Activated T-helper 2 cell treated with anti-CD3 and anti-CD28 coated beads, Interferon-gamma antibody, Interleukin-2, Interleukin-4, amounts not matched to agents 10 μg/mL and 5 μg/mL and 100 μg/mL, durations not matched to agents 14 hours and 24 hours and 36 hours (primary cell): ENCODE measurements at regions of chr6 and their contacts with region 1.

Region 1: GRCh38 chr6:33200219-33201146 is at the starts of genes RXRB and SLC39A7:
- DNase-seq: peak; percentile 97
- H3K4me3 Mint-ChIP-seq: peak within 1 kb of the TSS; percentile 100
- H3K27ac Mint-ChIP-seq: peak within 1 kb of the TSS; percentile 98
- H3K4me1 Mint-ChIP-seq: peaks cover 50% of the 10 kb centered on the region
- H3K27me3 Mint-ChIP-seq: no peaks in the 10 kb centered on the region
- total RNA-seq, gene RXRB: 47.8 and 50.0 TPM in 2 replicates
- total RNA-seq, gene SLC39A7: 63.8 and 69.6 TPM in 2 replicates

Region 2: DNA sequence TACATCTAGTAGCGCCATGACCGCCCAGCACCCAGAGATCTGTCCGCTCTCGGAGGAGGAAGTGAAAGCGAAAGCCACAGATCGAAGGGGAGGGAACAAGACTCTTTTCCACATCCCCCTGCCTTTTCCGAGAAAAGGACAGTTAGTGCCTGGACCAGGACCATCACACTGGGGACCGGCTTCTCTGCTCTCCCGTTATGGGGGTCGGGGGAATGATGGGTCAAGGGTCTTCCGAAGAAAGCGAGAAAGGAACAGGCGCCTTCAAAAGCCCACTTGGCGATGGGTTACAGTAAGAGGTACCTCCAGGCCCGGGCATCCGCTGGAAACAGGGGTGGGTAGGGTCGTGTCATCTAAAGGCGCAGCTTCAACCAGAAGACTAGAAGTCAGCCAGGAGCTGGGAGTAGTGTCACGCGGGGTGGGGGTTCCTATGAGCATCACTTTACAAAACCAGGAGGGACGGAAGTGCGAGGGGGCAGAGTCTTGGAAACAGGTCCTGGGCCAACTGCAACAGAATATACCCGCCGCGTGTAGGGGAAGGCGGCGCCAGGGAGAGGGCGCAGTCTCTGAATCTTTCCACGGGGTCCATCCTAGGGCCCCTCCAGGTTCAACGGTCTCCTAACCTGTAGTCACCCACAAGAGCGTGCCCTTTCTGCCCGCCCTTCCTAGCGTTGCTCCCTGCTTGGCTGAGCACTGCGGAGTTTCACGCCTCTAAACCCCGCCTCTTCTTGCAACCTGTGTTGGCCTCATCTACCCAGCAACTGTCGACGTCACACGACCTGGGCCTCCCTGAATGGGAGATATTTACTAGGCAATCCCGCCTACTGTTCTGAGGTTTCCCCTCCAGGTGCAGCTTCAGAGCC is 356.3 kb before region 1 on chr6 and contains the start of gene PSMB8:
- intact Hi-C with region 1: loop called (anchors 10 kb)
- DNase-seq: peak; percentile 96
- H3K4me3 Mint-ChIP-seq: peak within 1 kb of the TSS; percentile 99
- H3K27ac Mint-ChIP-seq: peak within 1 kb of the TSS; percentile 98
- H3K4me1 Mint-ChIP-seq: peaks cover 66% of the 10 kb centered on the region
- H3K27me3 Mint-ChIP-seq: no peaks in the 10 kb centered on the region
- total RNA-seq, gene PSMB8: 352 and 368 TPM in 2 replicates

Region 3: GRCh38 chr6:33161354-33162331 is 38.8 kb before region 1 on chr6:
- intact Hi-C with region 1: loop called (anchors 1 kb)
- DNase-seq: peak; percentile 77
- H3K4me3 Mint-ChIP-seq: peak overlapping the region; percentile 83
- H3K27ac Mint-ChIP-seq: peak overlapping the region; percentile 80
- H3K4me1 Mint-ChIP-seq: peaks cover 14% of the 10 kb centered on the region
- H3K27me3 Mint-ChIP-seq: peaks cover under 1% of the 10 kb centered on the region

Region 4: GRCh38 chr6:33172688-33173534 is 27.6 kb before region 1 on chr6:
- intact Hi-C with region 1: no loop called
- DNase-seq: no peak
- H3K4me3 Mint-ChIP-seq: no peak overlapping the region
- H3K27ac Mint-ChIP-seq: no peak overlapping the region
- H3K4me1 Mint-ChIP-seq: no peaks in the 10 kb centered on the region
- H3K27me3 Mint-ChIP-seq: peaks cover 2% of the 10 kb centered on the region

Region 5: DNA sequence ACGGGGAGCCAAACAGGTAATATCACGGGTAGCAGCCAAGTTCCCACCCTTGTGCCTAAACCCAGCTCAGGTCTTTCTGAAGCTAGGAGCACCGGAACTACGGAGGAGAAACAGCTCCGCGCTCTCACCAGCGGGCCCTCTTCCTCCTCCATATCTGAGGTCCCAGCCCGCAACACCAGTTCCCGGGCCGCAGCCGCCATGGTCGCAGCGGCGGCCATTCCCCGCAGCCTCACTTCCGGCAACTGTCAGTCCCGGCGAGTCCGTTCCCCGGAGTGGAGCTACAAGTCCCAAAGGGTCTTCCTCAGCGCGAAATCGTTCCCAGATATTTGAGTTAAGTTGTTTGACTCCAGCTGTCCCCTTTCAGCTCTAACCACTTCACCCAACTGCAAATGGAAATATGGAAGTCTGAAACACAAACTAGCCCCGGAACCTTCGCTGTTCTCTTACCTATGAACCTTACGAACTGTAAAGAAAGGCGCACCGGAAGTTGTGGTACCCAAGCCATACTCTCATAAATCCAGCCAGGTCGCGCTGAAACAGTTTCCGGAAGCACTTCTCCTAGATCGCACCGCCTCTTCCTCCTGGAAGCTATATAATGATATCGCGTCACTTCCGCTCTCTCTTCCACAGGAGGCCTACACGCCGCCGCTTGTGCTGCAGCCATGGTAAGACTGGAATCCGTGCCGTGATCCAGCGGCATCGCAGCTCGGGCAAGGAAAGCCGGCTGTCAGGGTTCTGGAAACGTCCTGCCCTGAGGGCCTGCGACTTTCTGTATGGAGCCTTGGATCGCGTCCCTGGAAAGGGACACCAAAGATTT is 71.2 kb after region 1 on chr6 and contains the starts of genes RPS18 and VPS52:
- intact Hi-C with region 1: loop called (anchors 2 kb)
- DNase-seq: peak; percentile 92
- H3K4me3 Mint-ChIP-seq: peak within 1 kb of the TSS; percentile 98
- H3K27ac Mint-ChIP-seq: peak within 1 kb of the TSS; percentile 100
- H3K4me1 Mint-ChIP-seq: peaks cover 31% of the 10 kb centered on the region
- H3K27me3 Mint-ChIP-seq: no peaks in the 10 kb centered on the region
- total RNA-seq, gene RPS18: 3,099 and 3,143 TPM in 2 replicates
- total RNA-seq, gene VPS52: 53.4 and 56.7 TPM in 2 replicates

Region 6: GRCh38 chr6:33391278-33391921 is 190.9 kb after region 1 on chr6 and contains the start of gene KIFC1:
- intact Hi-C with region 1: loop called (anchors 5 kb)
- DNase-seq: peak; percentile 99
- H3K4me3 Mint-ChIP-seq: peak within 1 kb of the TSS; percentile 87
- H3K27ac Mint-ChIP-seq: peak within 1 kb of the TSS; percentile 94
- H3K4me1 Mint-ChIP-seq: peaks cover 42% of the 10 kb centered on the region
- H3K27me3 Mint-ChIP-seq: no peaks in the 10 kb centered on the region
- total RNA-seq, gene KIFC1: 78.3 and 80.9 TPM in 2 replicates